ENCODE measurements at regions of chr19 and their contacts with region 1.

Region 1: DNA sequence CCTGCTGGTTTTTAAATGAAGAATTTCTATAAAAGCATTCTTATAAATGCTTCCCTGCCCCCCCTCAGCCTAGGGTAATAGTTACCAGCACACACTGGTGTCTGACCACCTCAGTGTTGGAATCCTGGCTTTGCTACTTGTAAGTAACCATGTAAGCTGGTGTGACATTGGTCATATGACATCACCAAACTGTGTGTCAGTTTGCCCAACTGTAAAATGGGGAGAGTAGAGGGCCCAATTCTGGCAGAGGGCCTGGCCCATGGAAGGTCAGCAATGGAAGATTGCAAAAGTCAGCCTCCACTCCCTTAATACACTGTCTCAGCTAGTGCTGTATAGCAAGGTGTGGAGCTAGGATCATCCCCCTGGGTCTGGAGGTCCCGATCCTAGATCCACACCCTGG is 31.6 kb downstream of the ACSBG2 start:
- DNase-seq: no peak
- H3K4me3 Mint-ChIP-seq: no peak overlapping the region
- H3K27ac Mint-ChIP-seq: no peak overlapping the region
- H3K4me1 Mint-ChIP-seq: peaks cover 6% of the 10 kb centered on the region
- H3K27me3 Mint-ChIP-seq: peaks cover 29% of the 10 kb centered on the region
- CTCF ChIP-seq: no peak

Region 2: GRCh38 chr19:6126335-6126974 is 40.7 kb before region 1 on chr19:
- CTCF ChIA-PET with region 1: no interaction called
- POLR2A ChIA-PET with region 1: no interaction called
- intact Hi-C with region 1: no loop called
- DNase-seq: peak; percentile 81
- H3K4me3 Mint-ChIP-seq: no peak overlapping the region
- H3K27ac Mint-ChIP-seq: no peak overlapping the region
- H3K4me1 Mint-ChIP-seq: peaks cover 5% of the 10 kb centered on the region
- H3K27me3 Mint-ChIP-seq: no peaks in the 10 kb centered on the region
- CTCF ChIP-seq: peak; percentile 59

Region 3: DNA sequence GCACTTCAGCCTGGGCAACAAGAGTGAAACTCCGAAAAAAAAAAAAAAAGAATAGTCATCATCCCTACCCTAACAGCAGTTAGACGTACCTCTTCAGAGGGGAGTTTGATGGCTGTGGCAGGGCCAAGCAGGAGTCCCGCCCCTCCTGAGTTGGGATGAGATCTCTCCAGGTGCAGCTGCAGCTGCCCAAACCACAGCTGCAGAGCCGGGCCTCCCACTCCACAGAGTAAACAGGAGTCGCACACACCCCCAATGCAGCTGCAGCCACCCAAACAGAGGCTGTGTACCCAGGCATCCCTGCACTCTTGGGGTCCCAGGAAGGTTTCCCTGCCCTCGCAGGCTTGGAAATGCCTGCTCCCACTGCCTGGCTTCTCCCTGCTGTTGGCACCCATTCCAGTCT is 130.1 kb after region 1 on chr19:
- CTCF ChIA-PET with region 1: interaction called, 3 read pairs
- POLR2A ChIA-PET with region 1: no interaction called
- intact Hi-C with region 1: loop called (anchors 2 kb)
- DNase-seq: no peak
- H3K4me3 Mint-ChIP-seq: no peak overlapping the region
- H3K27ac Mint-ChIP-seq: no peak overlapping the region
- H3K4me1 Mint-ChIP-seq: no peaks in the 10 kb centered on the region
- H3K27me3 Mint-ChIP-seq: no peaks in the 10 kb centered on the region
- CTCF ChIP-seq: no peak

Region 4: GRCh38 chr19:6354098-6354674 is 187.1 kb after region 1 on chr19:
- CTCF ChIA-PET with region 1: no interaction called
- POLR2A ChIA-PET with region 1: no interaction called
- intact Hi-C with region 1: loop called (anchors 2 kb)
- DNase-seq: no peak
- H3K4me3 Mint-ChIP-seq: no peak overlapping the region
- H3K27ac Mint-ChIP-seq: no peak overlapping the region
- H3K4me1 Mint-ChIP-seq: peaks cover 11% of the 10 kb centered on the region
- H3K27me3 Mint-ChIP-seq: no peaks in the 10 kb centered on the region
- CTCF ChIP-seq: peak; percentile 46

Measured in MCF 10A (cell line).